ENCODE measurements at regions of chr2 and their contacts with region 1.

Region 1: GRCh38 chr2:75807992-75808391 is 97.3 kb upstream of the GCFC2 start:
- DNase-seq: no peak
- ATAC-seq: no peak
- H3K4me3 ChIP-seq: no peak overlapping the region
- H3K4me3 Mint-ChIP-seq: no peak overlapping the region
- H3K27ac ChIP-seq: no peak overlapping the region
- H3K27ac Mint-ChIP-seq: no peak overlapping the region
- H3K4me1 ChIP-seq: no peaks in the 10 kb centered on the region
- H3K4me1 Mint-ChIP-seq: no peaks in the 10 kb centered on the region
- H3K27me3 ChIP-seq: no peaks in the 10 kb centered on the region
- H3K27me3 Mint-ChIP-seq: peaks cover 7% of the 10 kb centered on the region
- CTCF ChIP-seq: no peak

Region 2: DNA sequence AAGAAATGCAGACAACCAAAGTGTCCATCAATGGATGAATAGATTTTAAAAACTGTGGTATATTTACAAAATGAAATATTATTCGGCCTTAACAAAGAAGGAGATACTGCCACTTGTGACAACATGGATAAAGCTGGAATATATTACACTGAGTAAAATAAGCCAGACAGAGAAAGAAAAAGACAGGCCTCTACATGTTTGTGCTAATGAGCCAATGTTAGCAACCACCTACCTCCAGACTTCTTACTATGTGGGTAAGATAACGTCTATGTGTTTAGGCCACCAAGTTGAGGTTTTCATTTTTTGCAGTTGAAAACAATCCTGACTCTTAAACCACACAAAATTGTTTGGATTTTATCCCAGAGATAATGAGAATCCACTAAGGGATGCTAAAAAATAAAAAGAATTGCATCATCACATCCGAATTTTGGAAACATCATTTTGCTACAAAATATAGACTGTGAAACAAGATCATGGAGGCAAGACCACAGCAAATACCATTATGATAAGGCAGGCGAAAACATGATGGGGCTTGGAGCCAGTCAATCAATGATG is 294.3 kb before region 1 on chr2:
- CTCF ChIA-PET with region 1: no interaction called
- POLR2A ChIA-PET with region 1: no interaction called
- intact Hi-C with region 1: loop called in 1 of 2 experiments (anchors 5 kb)
- DNase-seq: no peak
- ATAC-seq: no peak
- H3K4me3 ChIP-seq: no peak overlapping the region
- H3K4me3 Mint-ChIP-seq: no peak overlapping the region
- H3K27ac ChIP-seq: no peak overlapping the region
- H3K27ac Mint-ChIP-seq: no peak overlapping the region
- H3K4me1 ChIP-seq: no peaks in the 10 kb centered on the region
- H3K4me1 Mint-ChIP-seq: no peaks in the 10 kb centered on the region
- H3K27me3 ChIP-seq: peaks cover 0 to 5% of the 10 kb centered on the region in 2 experiments
- H3K27me3 Mint-ChIP-seq: no peaks in the 10 kb centered on the region
- CTCF ChIP-seq: no peak